OCI-LY7 (cell line): ENCODE measurements at regions of chr1 and their contacts with region 1.

Region 1: DNA sequence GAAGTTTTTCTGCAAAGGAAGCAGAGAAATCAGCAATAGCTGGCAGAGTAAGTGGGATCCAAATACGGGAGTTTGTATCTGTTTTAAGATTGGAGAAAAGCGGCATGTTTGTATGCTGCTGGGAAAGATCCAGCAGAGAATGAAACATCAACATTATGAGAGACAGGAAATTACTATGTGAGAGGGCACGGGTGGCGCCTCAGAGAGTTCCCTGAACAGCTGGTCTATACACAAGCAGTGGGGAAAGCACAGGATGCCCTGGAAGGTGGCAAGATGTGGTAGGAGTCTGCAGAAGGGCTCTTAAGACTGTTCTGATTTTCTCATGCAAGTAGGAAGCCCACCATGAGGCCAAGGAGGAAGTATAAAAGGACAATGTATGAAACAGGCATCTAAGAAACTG is 130.4 kb downstream of the RERE start:
- DNase-seq: no peak
- H3K4me3 ChIP-seq: no peak overlapping the region
- H3K27ac ChIP-seq: no peak overlapping the region
- H3K4me1 ChIP-seq: peaks cover 16% of the 10 kb centered on the region
- CTCF ChIP-seq: no peak

Region 2: DNA sequence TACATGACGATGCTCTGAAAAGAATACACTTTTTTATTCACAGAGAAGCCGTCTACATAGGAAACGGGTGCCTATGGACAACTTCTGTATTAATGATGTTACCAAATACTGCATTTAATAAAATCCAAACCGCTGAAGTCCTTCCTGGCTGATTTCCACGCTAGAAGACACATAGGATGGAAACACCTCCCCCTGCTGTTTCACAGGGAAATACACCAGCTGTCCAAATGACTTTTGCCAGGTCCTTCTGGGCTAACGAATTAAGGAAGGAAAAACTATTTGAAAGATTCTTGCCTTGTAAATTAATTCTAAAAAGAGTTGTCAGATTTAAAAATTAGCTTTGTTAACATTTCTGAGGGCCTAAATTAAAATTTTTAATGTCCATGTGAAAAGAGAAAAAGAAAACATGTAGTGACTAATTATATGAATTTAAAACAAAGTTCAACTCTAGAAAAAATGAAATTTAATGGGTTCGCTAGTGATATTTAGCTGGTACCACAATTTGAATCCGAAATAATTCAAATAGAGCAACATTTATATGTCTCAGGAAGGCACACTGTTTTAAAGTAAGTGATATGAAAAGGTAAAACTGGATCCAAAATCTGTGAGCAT is 15.6 kb before region 1 on chr1:
- CTCF ChIA-PET with region 1: no interaction called
- POLR2A ChIA-PET with region 1: interaction called, 11 read pairs
- intact Hi-C with region 1: no loop called
- DNase-seq: peak; percentile 46
- H3K4me3 ChIP-seq: no peak overlapping the region
- H3K27ac ChIP-seq: no peak overlapping the region
- H3K4me1 ChIP-seq: peaks cover 24% of the 10 kb centered on the region
- CTCF ChIP-seq: peak; percentile 83

Region 3: GRCh38 chr1:8702850-8703810 is 16.1 kb after region 1 on chr1:
- CTCF ChIA-PET with region 1: no interaction called
- POLR2A ChIA-PET with region 1: interaction called, 10 read pairs
- intact Hi-C with region 1: no loop called
- DNase-seq: peak; percentile 67
- H3K4me3 ChIP-seq: peak overlapping the region; percentile 64
- H3K27ac ChIP-seq: no peak overlapping the region
- H3K4me1 ChIP-seq: peaks cover 46% of the 10 kb centered on the region
- CTCF ChIP-seq: no peak